ENCODE measurements at regions of chr18 and their contacts with region 1.

Region 1: GRCh38 chr18:37084890-37085289 is 256.0 kb downstream of the KIAA1328 start:
- DNase-seq: no peak
- H3K4me3 ChIP-seq: no peak overlapping the region
- H3K27ac ChIP-seq: no peak overlapping the region
- H3K4me1 ChIP-seq: no peaks in the 10 kb centered on the region
- H3K27me3 ChIP-seq: no peaks in the 10 kb centered on the region
- CTCF ChIP-seq: no peak

Region 2: GRCh38 chr18:36934884-36935283 is 150.0 kb before region 1 on chr18:
- CTCF ChIA-PET with region 1: no interaction called
- POLR2A ChIA-PET with region 1: interaction called, 10 read pairs
- intact Hi-C with region 1: no loop called
- DNase-seq: no peak
- H3K4me3 ChIP-seq: no peak overlapping the region
- H3K27ac ChIP-seq: no peak overlapping the region
- H3K4me1 ChIP-seq: no peaks in the 10 kb centered on the region
- H3K27me3 ChIP-seq: no peaks in the 10 kb centered on the region
- CTCF ChIP-seq: no peak

Region 3: GRCh38 chr18:37778417-37779165 is 693.7 kb after region 1 on chr18:
- CTCF ChIA-PET with region 1: no interaction called
- POLR2A ChIA-PET with region 1: no interaction called
- intact Hi-C with region 1: no loop called
- DNase-seq: peak; percentile 68
- H3K4me3 ChIP-seq: no peak overlapping the region
- H3K27ac ChIP-seq: no peak overlapping the region
- H3K4me1 ChIP-seq: no peaks in the 10 kb centered on the region
- H3K27me3 ChIP-seq: no peaks in the 10 kb centered on the region
- CTCF ChIP-seq: peak; percentile 85

Measured in A673 (cell line).